Activated CD8-positive, alpha-beta T cell treated with anti-CD3 and anti-CD28 coated beads for 36 hours (primary cell): ENCODE measurements at regions of chr1 and their contacts with region 1.

Region 1: DNA sequence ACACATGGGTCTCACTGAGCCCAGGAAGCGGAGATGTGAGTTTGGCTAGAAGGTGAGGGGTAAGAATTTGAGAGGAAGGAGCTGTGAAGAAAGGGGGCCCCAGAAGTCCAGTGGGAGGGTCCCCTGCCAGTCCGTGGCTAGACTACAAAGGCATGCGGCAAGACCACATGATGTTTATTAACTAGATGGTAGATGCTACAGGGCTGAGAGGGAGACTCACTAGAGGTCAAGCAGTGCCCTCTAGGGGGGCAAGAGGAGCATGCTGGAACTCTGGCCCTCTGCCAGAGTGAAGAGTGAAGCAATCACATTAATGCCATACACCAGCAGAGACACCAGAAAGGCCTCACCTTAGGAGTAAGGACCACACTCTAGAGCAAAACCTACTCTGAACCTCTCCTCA is 12.2 kb downstream of the KIAA0319L start:
- DNase-seq: peak; percentile 76
- ATAC-seq: peak; percentile 93
- H3K4me3 Mint-ChIP-seq: no peak overlapping the region
- H3K27ac Mint-ChIP-seq: peak overlapping the region; percentile 50
- H3K4me1 Mint-ChIP-seq: peaks cover 51% of the 10 kb centered on the region
- H3K27me3 Mint-ChIP-seq: no peaks in the 10 kb centered on the region
- CTCF ChIP-seq: peak; percentile 41

Region 2: GRCh38 chr1:35443768-35444518 is 101.0 kb before region 1 on chr1:
- CTCF ChIA-PET with region 1: interaction called, 140 read pairs
- POLR2A ChIA-PET with region 1: no interaction called
- intact Hi-C with region 1: no loop called
- DNase-seq: no peak
- ATAC-seq: peak; percentile 32
- H3K4me3 Mint-ChIP-seq: no peak overlapping the region
- H3K27ac Mint-ChIP-seq: no peak overlapping the region
- H3K4me1 Mint-ChIP-seq: peaks cover 29% of the 10 kb centered on the region
- H3K27me3 Mint-ChIP-seq: no peaks in the 10 kb centered on the region
- CTCF ChIP-seq: no peak

Region 3: DNA sequence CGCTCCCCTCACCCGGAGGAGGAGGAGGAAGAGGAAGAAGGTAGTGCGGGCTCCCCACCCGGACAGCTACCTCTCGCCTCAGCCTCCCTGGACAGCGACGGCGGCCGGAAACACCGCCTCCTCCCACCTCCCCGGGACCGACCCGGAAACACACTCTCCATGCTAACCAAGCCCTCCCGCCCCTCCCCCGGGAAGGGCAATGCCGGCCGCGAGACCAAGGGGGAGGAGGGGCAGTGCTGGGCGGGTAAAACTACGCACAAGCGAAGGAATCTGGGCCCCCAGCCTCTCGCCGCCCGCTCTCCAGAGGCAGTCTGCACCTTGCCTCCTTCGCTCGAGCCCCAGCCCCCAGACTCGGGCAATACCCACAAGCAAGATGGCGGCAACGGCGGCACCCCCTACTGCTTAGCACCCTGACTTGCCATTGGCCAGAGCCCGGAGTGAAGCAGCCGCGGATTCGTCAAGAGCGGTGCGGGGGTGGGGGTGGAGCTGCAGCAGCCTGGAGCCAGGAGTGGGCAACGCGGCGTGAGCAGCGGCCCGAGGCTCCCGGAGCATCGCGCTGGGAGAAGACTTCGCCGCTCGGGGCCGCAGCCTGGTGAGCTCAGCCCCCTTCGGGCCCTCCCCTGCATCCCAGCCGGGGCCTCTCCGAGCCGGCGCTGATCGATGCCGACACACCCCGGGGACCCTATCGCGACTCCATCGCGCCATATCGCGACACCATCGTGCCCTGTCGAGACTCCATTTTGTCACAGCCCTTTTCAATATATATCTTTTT is 12.5 kb after region 1 on chr1 and contains the starts of genes KIAA0319L and NCDN:
- CTCF ChIA-PET with region 1: interaction called, 5 read pairs
- POLR2A ChIA-PET with region 1: interaction called, 10 read pairs
- intact Hi-C with region 1: no loop called
- DNase-seq: peak; percentile 99
- ATAC-seq: peak; percentile 91
- H3K4me3 Mint-ChIP-seq: peak within 1 kb of the TSS; percentile 92
- H3K27ac Mint-ChIP-seq: peak within 1 kb of the TSS; percentile 96
- H3K4me1 Mint-ChIP-seq: peaks cover 45% of the 10 kb centered on the region
- H3K27me3 Mint-ChIP-seq: no peaks in the 10 kb centered on the region
- CTCF ChIP-seq: no peak
- total RNA-seq, gene KIAA0319L: 22.8 to 30.9 TPM
- total RNA-seq, gene NCDN: 17.3 to 17.5 TPM